ENCODE measurements at regions of chr6 and their contacts with region 1.

Region 1: GRCh38 chr6:30326526-30327260 is at the start of gene TRIM39:
- DNase-seq: peak; percentile 75 to 91 (median 86)
- H3K4me3 ChIP-seq: peak within 1 kb of the TSS; percentile 57 to 97 (median 91)
- H3K27ac ChIP-seq: peak within 1 kb of the TSS; percentile 80 to 99 (median 96)
- H3K27me3 ChIP-seq: no peaks in the 10 kb centered on the region
- CTCF ChIP-seq: peak in 30 of 56 donors; percentile 6 to 57 (median 23)
- total RNA-seq, gene TRIM39: 6.8 to 16.8 (median 11.0) TPM

Region 2: DNA sequence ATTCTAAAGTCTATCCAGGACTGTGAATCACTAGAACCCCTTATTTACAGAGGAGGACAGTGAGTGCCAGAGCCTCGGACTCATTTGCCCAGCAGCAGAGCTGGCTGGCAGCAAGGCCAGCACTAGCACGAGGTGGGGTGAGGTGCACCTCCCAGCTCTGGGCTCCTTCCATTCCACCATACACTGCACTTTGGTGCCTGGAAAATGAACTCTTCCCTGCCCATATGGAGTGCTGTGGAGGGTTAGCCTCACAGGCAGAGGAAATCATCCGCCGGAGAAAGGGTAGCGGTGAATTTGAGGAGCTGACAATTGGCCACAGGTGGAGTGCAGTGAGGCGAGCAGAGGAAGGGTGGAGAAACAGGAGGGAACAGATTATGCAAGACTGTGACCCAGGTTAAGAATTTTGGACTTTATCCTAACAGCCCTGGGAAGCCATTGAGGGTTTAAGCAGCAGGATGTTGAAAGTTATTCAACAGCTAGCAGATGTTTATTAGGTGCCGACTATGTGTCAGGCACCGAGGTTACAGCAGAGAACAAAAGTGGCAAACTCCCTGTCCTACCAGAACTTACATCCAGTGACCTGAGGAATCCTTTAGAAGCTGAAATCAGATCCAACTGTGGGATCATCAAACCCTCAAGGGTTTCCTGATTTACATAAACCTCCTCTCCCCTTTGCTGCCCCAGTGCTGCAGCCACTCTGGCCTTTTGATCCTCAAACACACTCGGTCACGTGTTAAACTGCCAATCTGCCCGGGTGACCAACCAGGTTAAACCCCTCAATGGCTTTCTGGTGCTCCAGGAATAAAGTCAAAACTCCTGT is 119.7 kb before region 1 on chr6:
- intact Hi-C with region 1: loop called (anchors 2 kb)
- DNase-seq: no peak
- H3K4me3 ChIP-seq: no peak overlapping the region
- H3K27ac ChIP-seq: peak overlapping the region in 17 of 59 donors; percentile 3 to 59 (median 28)
- H3K27me3 ChIP-seq: no peaks in the 10 kb centered on the region
- CTCF ChIP-seq: no peak

Region 3: DNA sequence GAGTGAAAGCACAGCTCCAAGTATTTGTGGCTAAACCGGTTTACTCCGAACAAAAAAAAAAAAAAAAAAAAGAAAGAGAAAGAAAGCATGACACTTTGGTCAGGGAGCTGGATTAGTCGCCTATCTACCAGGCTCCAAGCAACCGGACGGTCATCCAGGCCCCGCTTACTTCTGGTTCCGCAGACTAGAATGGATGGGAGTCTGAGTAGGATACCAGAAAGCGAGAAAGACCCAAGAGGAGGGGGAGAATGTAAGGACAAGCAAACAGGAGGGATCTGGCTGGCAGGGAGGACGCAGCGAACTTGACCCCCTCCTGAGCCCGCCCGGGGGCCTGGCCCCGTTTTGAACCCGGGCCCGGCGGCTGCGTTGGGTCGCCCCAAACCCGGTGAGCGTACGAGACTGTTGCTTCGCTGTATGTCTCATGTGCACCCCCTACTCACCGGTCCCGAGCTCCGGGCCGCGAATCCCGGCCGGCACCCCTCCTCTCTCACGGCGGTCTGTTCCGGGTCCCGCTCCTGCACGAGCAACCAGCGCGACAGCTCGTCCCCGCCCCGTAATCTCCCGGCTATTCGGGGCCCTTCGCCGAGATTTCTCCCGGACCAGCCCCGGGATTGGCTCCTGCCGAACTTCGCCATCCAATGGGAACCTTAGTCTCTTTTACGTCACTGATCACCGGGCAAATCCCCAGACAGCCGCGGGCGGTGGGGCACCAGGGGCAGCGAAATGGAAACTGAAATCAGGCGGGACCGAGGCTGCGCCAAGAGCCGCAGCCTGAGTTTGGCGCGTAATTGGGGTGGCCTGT is 113.6 kb before region 1 on chr6 and contains the start of gene TRIM26:
- intact Hi-C with region 1: loop called (anchors 2 kb)
- DNase-seq: peak; percentile 92 to 98 (median 96)
- H3K4me3 ChIP-seq: peak within 1 kb of the TSS; percentile 62 to 100 (median 93)
- H3K27ac ChIP-seq: peak within 1 kb of the TSS; percentile 86 to 99 (median 96)
- H3K27me3 ChIP-seq: no peaks in the 10 kb centered on the region
- CTCF ChIP-seq: peak in 9 of 56 donors; percentile 4 to 29 (median 9)
- total RNA-seq, gene TRIM26: 22.4 to 51.1 (median 31.6) TPM

Measured in dorsolateral prefrontal cortex (tissue), 120 donors.